ENCODE measurements at regions of chr6 and their contacts with region 1.

Region 1: DNA sequence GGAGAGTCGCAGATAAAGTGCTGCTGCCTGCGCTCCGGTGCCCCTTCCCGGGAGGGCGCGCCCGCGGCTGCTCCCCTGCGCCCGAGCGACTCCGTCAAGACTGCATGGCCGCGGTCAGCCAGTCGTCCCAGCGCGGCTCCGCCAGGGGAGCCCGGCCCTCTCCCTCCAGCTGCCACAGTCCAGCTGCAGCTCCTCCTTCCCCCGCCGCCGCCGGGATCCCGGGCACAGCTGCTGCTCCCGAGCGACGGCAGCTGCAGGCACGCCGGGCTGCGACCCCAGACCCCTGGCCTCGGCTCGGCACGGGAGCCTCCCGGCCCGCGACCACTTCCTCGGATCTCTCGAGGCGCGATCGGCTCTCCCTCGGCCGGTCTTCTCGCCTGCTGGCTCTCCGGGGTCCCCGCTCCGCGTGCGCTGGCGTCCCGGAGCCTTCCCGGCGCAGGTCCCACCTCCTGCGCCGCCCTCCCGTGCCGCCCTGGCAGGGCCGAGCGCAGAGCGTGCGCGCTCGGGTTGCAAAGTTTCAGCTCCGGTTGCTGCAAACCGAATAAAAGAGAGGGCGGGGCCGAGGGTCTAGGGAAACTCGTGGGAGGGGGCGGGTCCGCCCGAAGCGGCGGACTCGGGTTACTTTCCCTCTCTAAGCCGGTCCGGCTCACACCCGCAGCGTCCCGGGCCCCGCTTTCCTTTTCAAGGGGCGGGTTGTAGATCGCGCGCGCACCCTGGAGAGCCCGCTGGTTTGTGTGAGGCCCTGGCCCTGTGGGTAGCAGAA is at the start of gene CNKSR3:
- DNase-seq: peak; percentile 93
- H3K4me3 ChIP-seq: peak within 1 kb of the TSS; percentile 93
- H3K27ac ChIP-seq: peak within 1 kb of the TSS; percentile 88
- H3K27me3 ChIP-seq: no peaks in the 10 kb centered on the region
- CTCF ChIP-seq: peak; percentile 37; the same call in 1 of the 2 replicates
- polyA plus RNA-seq, gene CNKSR3: 8.6 and 10.1 TPM in 2 replicates

Region 2: GRCh38 chr6:154478021-154478700 is 32.2 kb before region 1 on chr6:
- CTCF ChIA-PET with region 1: no interaction called
- POLR2A ChIA-PET with region 1: interaction called, 14 read pairs
- DNase-seq: no peak
- H3K4me3 ChIP-seq: no peak overlapping the region
- H3K27ac ChIP-seq: peak overlapping the region; percentile 86
- H3K27me3 ChIP-seq: no peaks in the 10 kb centered on the region
- CTCF ChIP-seq: no peak

Region 3: DNA sequence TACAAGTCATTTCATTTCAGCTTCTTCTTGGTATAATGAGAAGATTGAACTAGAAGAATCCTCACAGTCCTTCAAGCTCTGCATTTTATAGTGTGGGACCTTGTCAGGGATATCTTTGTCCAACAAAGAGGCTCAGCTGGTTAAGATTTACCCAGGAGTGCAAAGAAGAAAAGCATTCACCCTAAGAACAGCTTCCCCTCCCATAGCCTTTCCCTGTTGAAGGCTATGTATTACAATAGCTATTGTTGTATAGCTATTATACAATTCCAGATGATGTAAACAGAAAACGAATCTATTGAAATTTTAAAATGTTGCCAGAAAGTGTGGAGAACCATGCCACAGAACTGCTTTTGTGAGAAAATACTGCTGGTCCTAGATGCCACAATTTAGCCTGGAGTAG is 85.7 kb after region 1 on chr6:
- CTCF ChIA-PET with region 1: interaction called, 10 read pairs
- POLR2A ChIA-PET with region 1: interaction called, 4 read pairs
- DNase-seq: no peak
- H3K4me3 ChIP-seq: no peak overlapping the region
- H3K27ac ChIP-seq: no peak overlapping the region
- H3K27me3 ChIP-seq: peaks cover 2% of the 10 kb centered on the region
- CTCF ChIP-seq: no peak